ENCODE measurements at regions of chr1 and their contacts with region 1.

Region 1: DNA sequence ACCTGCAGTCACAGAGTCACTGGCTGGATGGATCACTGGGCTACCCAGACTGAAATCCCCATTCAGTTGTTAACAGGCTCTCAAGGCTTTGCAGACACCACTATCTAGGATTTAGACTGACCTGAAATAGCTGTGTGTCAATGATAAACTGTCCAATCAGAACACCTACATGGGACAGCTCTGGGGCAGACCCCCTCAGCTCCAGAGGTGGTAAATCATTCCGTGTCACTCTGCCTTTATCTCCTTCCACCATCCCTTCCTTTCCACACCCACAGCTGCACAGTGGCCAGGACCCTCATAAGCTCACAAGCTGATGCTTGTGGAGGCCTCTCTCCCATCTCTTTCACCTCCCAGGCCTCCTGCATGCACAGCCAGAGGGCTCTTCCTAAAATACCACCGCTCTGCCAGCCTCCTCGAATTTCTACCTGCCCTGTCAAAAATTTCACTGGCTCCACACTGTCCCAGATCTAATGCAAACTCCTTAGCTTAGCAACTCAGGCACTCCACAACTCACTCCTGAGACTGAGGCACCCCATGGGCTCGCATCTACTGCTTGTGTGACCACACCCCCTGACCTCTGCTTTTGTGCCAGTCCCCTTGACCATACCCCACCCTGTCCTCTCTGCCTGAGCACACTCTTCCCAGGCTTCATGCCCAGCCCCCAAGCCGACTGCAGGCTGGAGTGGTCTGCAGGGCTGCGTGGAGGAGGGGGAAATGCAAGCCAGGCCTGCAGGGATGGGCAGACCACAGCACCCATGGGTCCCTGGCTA is 5.8 kb downstream of the CAPZB start:
- DNase-seq: no peak
- ATAC-seq: no peak
- H3K4me3 ChIP-seq: no peak overlapping the region
- H3K4me3 Mint-ChIP-seq: peak overlapping the region; percentile 3 to 83 (median 7)
- H3K27ac ChIP-seq: peak overlapping the region; percentile 92
- H3K27ac Mint-ChIP-seq: peak overlapping the region; percentile 96 to 98
- H3K4me1 ChIP-seq: peaks cover 77 to 99% of the 10 kb centered on the region in 2 experiments
- H3K4me1 Mint-ChIP-seq: peaks cover 96 to 97% (median 96%) of the 10 kb centered on the region in 3 donors
- H3K27me3 ChIP-seq: no peaks in the 10 kb centered on the region
- H3K27me3 Mint-ChIP-seq: no peaks in the 10 kb centered on the region

Region 2: GRCh38 chr1:19463504-19463803 is 16.1 kb before region 1 on chr1:
- CTCF ChIA-PET with region 1: interaction called, 4 to 10 read pairs
- POLR2A ChIA-PET with region 1: interaction called, 3 to 4 read pairs
- DNase-seq: peak in 1 of 35 experiments; percentile 42
- ATAC-seq: no peak
- H3K4me3 ChIP-seq: peak overlapping the region; percentile 12 to 25
- H3K4me3 Mint-ChIP-seq: peak overlapping the region; percentile 66 to 83 (median 69)
- H3K27ac ChIP-seq: peak overlapping the region; percentile 88
- H3K27ac Mint-ChIP-seq: peak overlapping the region; percentile 90 to 99
- H3K4me1 ChIP-seq: peaks cover 73 to 98% of the 10 kb centered on the region in 2 experiments
- H3K4me1 Mint-ChIP-seq: peaks cover 94 to 95% (median 95%) of the 10 kb centered on the region in 3 donors
- H3K27me3 ChIP-seq: no peaks in the 10 kb centered on the region
- H3K27me3 Mint-ChIP-seq: no peaks in the 10 kb centered on the region